MCF 10A (cell line): ENCODE measurements at regions of chr2 and their contacts with region 1.

Region 1: DNA sequence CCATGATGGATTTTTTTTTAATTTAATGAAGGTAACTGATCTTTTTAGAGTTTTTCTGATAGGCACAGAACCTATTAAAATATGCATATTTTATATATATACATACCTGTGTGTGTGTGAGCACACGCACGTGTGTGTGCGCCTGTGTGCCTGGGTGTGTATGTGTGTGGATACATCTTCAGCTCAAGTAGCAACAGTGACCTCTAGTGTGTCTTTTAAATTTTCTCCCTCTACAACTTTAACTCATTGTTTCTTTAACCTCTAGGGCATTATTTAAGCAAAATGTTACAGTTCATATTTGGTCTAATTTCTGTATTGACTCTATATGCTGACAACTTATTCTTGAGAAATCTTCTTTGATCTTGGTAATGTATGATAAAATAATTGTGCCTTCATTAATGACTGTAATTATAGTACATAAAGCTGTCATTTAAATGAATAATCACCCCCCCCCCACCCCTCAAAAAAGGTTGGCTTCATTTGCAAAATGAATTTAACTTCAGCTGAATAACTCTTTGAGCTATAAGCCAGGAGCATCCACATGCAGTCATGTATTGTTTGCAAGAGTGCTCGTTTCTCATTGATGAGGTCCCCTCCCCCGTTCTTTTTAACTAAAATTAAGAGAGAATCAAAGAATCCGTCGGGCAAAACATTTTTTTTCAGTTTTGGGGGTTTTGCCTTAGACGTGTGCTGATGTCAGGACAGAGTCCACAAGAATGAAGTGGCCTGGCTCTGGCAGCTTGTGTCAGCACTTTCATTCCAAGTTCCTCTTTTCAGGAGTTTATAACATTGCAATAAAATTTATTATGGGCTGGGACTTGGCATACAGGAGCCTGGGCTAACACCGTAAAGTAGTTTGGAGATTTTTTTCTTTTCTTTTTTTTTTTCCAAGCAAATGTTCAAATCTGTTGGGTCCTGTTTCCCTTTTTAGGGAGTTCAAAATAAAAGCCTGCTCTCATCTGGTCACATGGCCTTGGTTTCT is 80.0 kb downstream of the ETAA1 start:
- DNase-seq: peak; percentile 56
- H3K4me3 Mint-ChIP-seq: no peak overlapping the region
- H3K27ac Mint-ChIP-seq: peak overlapping the region; percentile 7
- H3K4me1 Mint-ChIP-seq: no peaks in the 10 kb centered on the region
- H3K27me3 Mint-ChIP-seq: no peaks in the 10 kb centered on the region
- CTCF ChIP-seq: peak; percentile 50

Region 2: DNA sequence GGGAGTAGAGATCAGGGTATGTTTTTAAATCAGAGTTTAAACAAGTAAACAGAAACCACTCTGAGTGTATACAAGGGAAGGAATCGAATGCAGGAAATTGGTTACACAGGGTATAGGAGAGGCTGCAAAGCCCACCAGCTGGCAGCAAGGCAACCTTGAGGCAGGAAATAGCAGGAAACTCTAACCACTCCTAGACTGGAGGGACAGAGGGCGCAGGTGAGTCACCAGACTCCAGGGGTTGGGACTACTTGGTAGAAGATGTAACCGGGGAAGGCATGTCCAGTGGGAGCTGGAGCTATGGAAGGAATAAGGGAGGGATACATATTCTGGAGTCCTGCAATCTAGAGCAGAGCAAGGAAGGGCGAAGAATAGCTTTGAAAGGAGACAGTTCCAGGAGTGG is 889.9 kb before region 1 on chr2:
- CTCF ChIA-PET with region 1: no interaction called
- POLR2A ChIA-PET with region 1: no interaction called
- intact Hi-C with region 1: no loop called
- DNase-seq: peak; percentile 66
- H3K4me3 Mint-ChIP-seq: no peak overlapping the region
- H3K27ac Mint-ChIP-seq: no peak overlapping the region
- H3K4me1 Mint-ChIP-seq: no peaks in the 10 kb centered on the region
- H3K27me3 Mint-ChIP-seq: no peaks in the 10 kb centered on the region
- CTCF ChIP-seq: peak; percentile 27

Region 3: GRCh38 chr2:67215214-67216055 is 261.7 kb before region 1 on chr2:
- CTCF ChIA-PET with region 1: no interaction called
- POLR2A ChIA-PET with region 1: no interaction called
- intact Hi-C with region 1: loop called (anchors 1 kb)
- DNase-seq: peak; percentile 76
- H3K4me3 Mint-ChIP-seq: peak overlapping the region; percentile 21
- H3K27ac Mint-ChIP-seq: peak overlapping the region; percentile 32
- H3K4me1 Mint-ChIP-seq: peaks cover 6% of the 10 kb centered on the region
- H3K27me3 Mint-ChIP-seq: no peaks in the 10 kb centered on the region
- CTCF ChIP-seq: peak; percentile 77

Region 4: GRCh38 chr2:67234439-67234838 is 242.7 kb before region 1 on chr2:
- CTCF ChIA-PET with region 1: interaction called, 3 read pairs
- POLR2A ChIA-PET with region 1: no interaction called
- intact Hi-C with region 1: loop called (anchors 1 kb)
- DNase-seq: peak; percentile 16
- H3K4me3 Mint-ChIP-seq: no peak overlapping the region
- H3K27ac Mint-ChIP-seq: no peak overlapping the region
- H3K4me1 Mint-ChIP-seq: no peaks in the 10 kb centered on the region
- H3K27me3 Mint-ChIP-seq: no peaks in the 10 kb centered on the region
- CTCF ChIP-seq: peak; percentile 38

Region 5: GRCh38 chr2:67322353-67323001 is 154.6 kb before region 1 on chr2:
- CTCF ChIA-PET with region 1: interaction called, 3 read pairs
- POLR2A ChIA-PET with region 1: no interaction called
- intact Hi-C with region 1: loop called (anchors 2 kb)
- DNase-seq: peak; percentile 76
- H3K4me3 Mint-ChIP-seq: no peak overlapping the region
- H3K27ac Mint-ChIP-seq: peak overlapping the region; percentile 57
- H3K4me1 Mint-ChIP-seq: peaks cover 6% of the 10 kb centered on the region
- H3K27me3 Mint-ChIP-seq: no peaks in the 10 kb centered on the region
- CTCF ChIP-seq: peak; percentile 44

Region 6: GRCh38 chr2:67463810-67464209 is 13.3 kb before region 1 on chr2:
- CTCF ChIA-PET with region 1: interaction called, 24 read pairs
- POLR2A ChIA-PET with region 1: interaction called, 12 read pairs
- intact Hi-C with region 1: no loop called
- DNase-seq: peak; percentile 97
- H3K4me3 Mint-ChIP-seq: peak overlapping the region; percentile 28
- H3K27ac Mint-ChIP-seq: peak overlapping the region; percentile 92
- H3K4me1 Mint-ChIP-seq: peaks cover 37% of the 10 kb centered on the region
- H3K27me3 Mint-ChIP-seq: no peaks in the 10 kb centered on the region
- CTCF ChIP-seq: no peak

Region 7: GRCh38 chr2:67716895-67717396 is 239.8 kb after region 1 on chr2:
- CTCF ChIA-PET with region 1: no interaction called
- POLR2A ChIA-PET with region 1: no interaction called
- intact Hi-C with region 1: no loop called
- DNase-seq: no peak
- H3K4me3 Mint-ChIP-seq: no peak overlapping the region
- H3K27ac Mint-ChIP-seq: no peak overlapping the region
- H3K4me1 Mint-ChIP-seq: peaks cover 6% of the 10 kb centered on the region
- H3K27me3 Mint-ChIP-seq: no peaks in the 10 kb centered on the region
- CTCF ChIP-seq: no peak

Region 8: DNA sequence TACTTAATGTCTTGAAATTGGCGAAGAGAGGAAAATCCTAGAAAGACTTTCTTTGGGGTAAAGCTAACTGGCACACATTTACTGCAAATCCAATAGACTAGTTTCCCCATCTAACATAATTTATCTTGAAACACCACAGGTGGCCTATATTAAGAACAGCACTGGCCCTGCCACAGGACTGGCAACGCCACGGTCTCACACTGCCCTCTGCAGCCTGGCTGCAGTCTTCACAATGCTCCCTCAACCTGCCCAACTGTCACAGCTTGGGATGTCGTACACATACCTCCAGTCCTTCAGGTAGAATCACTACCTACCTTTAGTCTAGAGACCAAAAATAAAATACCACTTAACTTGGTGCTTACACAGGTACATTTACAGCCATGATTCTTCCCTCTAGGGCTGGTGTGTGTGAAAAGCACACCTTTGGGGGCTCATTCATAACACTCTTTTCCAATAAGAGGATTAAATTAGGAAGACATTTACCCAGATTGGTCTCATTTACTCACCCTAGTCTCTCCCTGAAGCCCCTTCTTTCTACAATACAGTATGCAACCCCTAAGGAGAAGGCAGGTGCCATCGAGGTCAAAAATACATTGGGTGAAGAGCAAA is 363.5 kb after region 1 on chr2:
- CTCF ChIA-PET with region 1: interaction called, 10 read pairs
- POLR2A ChIA-PET with region 1: no interaction called
- intact Hi-C with region 1: loop called (anchors 5 kb)
- DNase-seq: peak; percentile 73
- H3K4me3 Mint-ChIP-seq: no peak overlapping the region
- H3K27ac Mint-ChIP-seq: no peak overlapping the region
- H3K4me1 Mint-ChIP-seq: peaks cover 7% of the 10 kb centered on the region
- H3K27me3 Mint-ChIP-seq: no peaks in the 10 kb centered on the region
- CTCF ChIP-seq: peak; percentile 90

Region 9: GRCh38 chr2:67846370-67847070 is 369.4 kb after region 1 on chr2:
- CTCF ChIA-PET with region 1: interaction called, 3 read pairs
- POLR2A ChIA-PET with region 1: interaction called, 3 read pairs
- intact Hi-C with region 1: loop called (anchors 5 kb)
- DNase-seq: peak; percentile 99
- H3K4me3 Mint-ChIP-seq: no peak overlapping the region
- H3K27ac Mint-ChIP-seq: peak overlapping the region; percentile 95
- H3K4me1 Mint-ChIP-seq: peaks cover 14% of the 10 kb centered on the region
- H3K27me3 Mint-ChIP-seq: no peaks in the 10 kb centered on the region
- CTCF ChIP-seq: peak; percentile 74